PC-3 (cell line): ENCODE measurements at regions of chr11 and their contacts with region 1.

Region 1: GRCh38 chr11:60775420-60775961 is 9.6 kb upstream of the MS4A10 start:
- DNase-seq: peak; percentile 97
- ATAC-seq: peak; percentile 87
- H3K4me3 ChIP-seq: no peak overlapping the region
- H3K27ac ChIP-seq: no peak overlapping the region
- H3K4me1 ChIP-seq: peaks cover 11% of the 10 kb centered on the region
- H3K27me3 ChIP-seq: no peaks in the 10 kb centered on the region
- CTCF ChIP-seq: peak; percentile 93

Region 2: DNA sequence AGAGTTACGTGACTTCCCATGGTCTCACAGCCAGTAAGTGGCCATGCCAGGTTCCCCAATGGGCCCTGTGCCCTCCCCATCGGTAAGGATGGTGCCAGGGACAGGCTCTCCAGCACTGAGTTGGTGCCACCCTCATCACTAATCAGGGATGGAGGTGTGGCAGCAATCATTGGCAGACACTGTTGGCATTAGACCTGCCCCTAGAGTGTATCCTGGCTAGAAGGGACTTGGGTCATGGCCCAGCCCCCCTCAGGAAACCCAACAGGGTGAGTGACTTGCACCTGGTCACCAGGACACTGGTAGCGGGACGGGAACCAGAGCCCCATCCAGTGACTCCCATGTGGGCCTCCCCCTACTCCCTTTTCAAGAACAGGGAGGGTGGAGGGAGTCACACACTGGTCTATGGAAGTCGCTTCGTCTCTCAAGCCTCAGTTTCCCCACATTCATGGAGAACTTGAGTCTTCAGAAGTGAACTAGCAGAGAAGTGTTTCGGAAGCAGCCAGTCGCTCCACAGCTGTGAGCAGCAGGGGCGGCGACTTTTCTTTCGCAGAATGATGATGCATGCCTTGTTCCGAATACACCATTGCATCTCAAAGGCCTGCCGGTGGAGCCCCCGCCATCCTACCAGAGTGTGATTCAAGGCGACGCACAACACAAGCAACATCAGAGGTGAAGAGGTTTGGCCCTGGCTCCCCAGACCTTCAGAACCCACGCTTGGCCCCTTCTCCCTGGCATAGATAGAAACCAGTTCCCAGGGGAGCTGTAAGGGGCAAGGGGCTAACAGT is 22.5 kb after region 1 on chr11:
- CTCF ChIA-PET with region 1: no interaction called
- POLR2A ChIA-PET with region 1: no interaction called
- intact Hi-C with region 1: no loop called
- DNase-seq: no peak
- ATAC-seq: no peak
- H3K4me3 ChIP-seq: no peak overlapping the region
- H3K27ac ChIP-seq: no peak overlapping the region
- H3K4me1 ChIP-seq: no peaks in the 10 kb centered on the region
- H3K27me3 ChIP-seq: peaks cover 46% of the 10 kb centered on the region
- CTCF ChIP-seq: no peak

Region 3: GRCh38 chr11:60887556-60887955 is 112.1 kb after region 1 on chr11:
- CTCF ChIA-PET with region 1: interaction called, 13 read pairs
- POLR2A ChIA-PET with region 1: no interaction called
- intact Hi-C with region 1: loop called (anchors 1 kb)
- DNase-seq: peak; percentile 79
- ATAC-seq: peak; percentile 98
- H3K4me3 ChIP-seq: no peak overlapping the region
- H3K27ac ChIP-seq: no peak overlapping the region
- H3K4me1 ChIP-seq: no peaks in the 10 kb centered on the region
- H3K27me3 ChIP-seq: no peaks in the 10 kb centered on the region
- CTCF ChIP-seq: peak; percentile 93

Region 4: GRCh38 chr11:60899046-60899936 is 123.8 kb after region 1 on chr11:
- CTCF ChIA-PET with region 1: interaction called, 9 read pairs
- POLR2A ChIA-PET with region 1: no interaction called
- intact Hi-C with region 1: loop called (anchors 1 kb)
- DNase-seq: peak; percentile 89
- ATAC-seq: peak; percentile 96
- H3K4me3 ChIP-seq: no peak overlapping the region
- H3K27ac ChIP-seq: no peak overlapping the region
- H3K4me1 ChIP-seq: peaks cover 5% of the 10 kb centered on the region
- H3K27me3 ChIP-seq: no peaks in the 10 kb centered on the region
- CTCF ChIP-seq: peak; percentile 97

Region 5: GRCh38 chr11:61061081-61061826 is 285.8 kb after region 1 on chr11:
- CTCF ChIA-PET with region 1: no interaction called
- POLR2A ChIA-PET with region 1: no interaction called
- intact Hi-C with region 1: no loop called
- DNase-seq: peak; percentile 81
- ATAC-seq: peak; percentile 84
- H3K4me3 ChIP-seq: 0 out of 2 replicates have a peak overlapping the region, but pooled peaks have one; percentile 13
- H3K27ac ChIP-seq: no peak overlapping the region
- H3K4me1 ChIP-seq: peaks cover 14% of the 10 kb centered on the region
- H3K27me3 ChIP-seq: no peaks in the 10 kb centered on the region
- CTCF ChIP-seq: no peak

Region 6: DNA sequence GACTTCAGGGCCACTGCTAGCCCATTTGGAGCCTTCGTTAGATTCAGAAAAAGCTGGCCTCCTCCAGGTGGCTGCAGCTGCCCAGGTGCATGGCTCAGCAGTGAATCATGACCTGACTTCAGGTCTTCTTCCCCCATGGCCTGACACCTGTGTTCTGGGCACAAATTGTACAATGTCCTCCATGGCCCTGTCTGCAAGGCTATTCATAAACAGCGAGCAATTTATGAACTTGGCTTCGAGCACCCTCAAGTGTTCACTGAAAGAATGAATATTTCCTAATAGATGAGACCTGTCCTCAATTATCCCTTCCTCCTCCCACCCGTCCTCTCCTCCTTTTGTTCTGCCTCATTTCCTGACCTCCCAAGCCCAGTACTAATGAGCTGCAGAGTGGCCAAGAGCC is 398.0 kb after region 1 on chr11:
- CTCF ChIA-PET with region 1: no interaction called
- POLR2A ChIA-PET with region 1: no interaction called
- intact Hi-C with region 1: loop called (anchors 1 kb)
- DNase-seq: peak; percentile 84
- ATAC-seq: peak; percentile 93
- H3K4me3 ChIP-seq: no peak overlapping the region
- H3K27ac ChIP-seq: no peak overlapping the region
- H3K4me1 ChIP-seq: peaks cover 6% of the 10 kb centered on the region; the same call in 1 of the 2 replicates
- H3K27me3 ChIP-seq: peaks cover 30% of the 10 kb centered on the region
- CTCF ChIP-seq: peak; percentile 72

Region 7: DNA sequence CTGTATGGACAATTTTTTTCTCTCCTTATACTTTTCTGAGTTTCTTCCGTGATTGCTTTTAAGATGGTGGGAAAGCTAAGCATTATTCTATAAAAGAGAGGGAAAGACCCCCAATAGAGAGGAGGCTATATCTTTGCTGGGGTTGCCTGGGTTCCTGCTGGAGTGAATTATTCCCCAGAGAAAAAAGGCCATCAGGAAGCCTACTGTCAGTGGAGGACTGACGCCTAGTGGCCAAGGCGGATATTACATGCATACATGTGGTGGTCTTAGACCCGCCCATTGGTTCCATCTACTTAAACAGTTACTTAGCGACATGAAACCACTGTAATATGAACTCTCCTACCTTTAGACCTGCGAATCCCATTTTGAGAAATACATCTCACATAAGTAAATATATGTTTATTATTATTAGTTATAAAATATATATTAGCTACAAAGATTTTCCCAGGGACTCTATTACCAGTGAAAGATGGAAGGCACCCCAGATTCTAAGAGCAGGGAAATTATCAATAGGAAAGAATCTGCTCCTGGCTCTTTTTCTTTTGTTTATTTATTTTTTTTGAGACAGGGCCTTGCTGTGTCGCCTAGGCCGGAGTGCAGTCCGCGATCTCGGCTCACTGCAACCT is 412.1 kb after region 1 on chr11:
- CTCF ChIA-PET with region 1: no interaction called
- POLR2A ChIA-PET with region 1: no interaction called
- intact Hi-C with region 1: loop called (anchors 1 kb)
- DNase-seq: peak; percentile 91
- ATAC-seq: peak; percentile 87
- H3K4me3 ChIP-seq: no peak overlapping the region
- H3K27ac ChIP-seq: no peak overlapping the region
- H3K4me1 ChIP-seq: no peaks in the 10 kb centered on the region
- H3K27me3 ChIP-seq: no peaks in the 10 kb centered on the region
- CTCF ChIP-seq: peak; percentile 94